Ovary (tissue), 10 donors: ENCODE measurements at regions of chr2 and their contacts with region 1.

Region 1: GRCh38 chr2:119028327-119029174 is 86.6 kb downstream of the MARCO start:
- DNase-seq: peak in 3 of 5 donors; percentile 35 to 44 (median 42)
- H3K4me3 ChIP-seq: no peak overlapping the region
- H3K27ac ChIP-seq: no peak overlapping the region
- H3K4me1 ChIP-seq: no peaks in the 10 kb centered on the region
- H3K27me3 ChIP-seq: no peaks in the 10 kb centered on the region
- CTCF ChIP-seq: peak in 2 of 3 donors; percentile 20 to 25
- EP300 ChIP-seq: no peak
- POLR2A ChIP-seq: no peak

Region 2: DNA sequence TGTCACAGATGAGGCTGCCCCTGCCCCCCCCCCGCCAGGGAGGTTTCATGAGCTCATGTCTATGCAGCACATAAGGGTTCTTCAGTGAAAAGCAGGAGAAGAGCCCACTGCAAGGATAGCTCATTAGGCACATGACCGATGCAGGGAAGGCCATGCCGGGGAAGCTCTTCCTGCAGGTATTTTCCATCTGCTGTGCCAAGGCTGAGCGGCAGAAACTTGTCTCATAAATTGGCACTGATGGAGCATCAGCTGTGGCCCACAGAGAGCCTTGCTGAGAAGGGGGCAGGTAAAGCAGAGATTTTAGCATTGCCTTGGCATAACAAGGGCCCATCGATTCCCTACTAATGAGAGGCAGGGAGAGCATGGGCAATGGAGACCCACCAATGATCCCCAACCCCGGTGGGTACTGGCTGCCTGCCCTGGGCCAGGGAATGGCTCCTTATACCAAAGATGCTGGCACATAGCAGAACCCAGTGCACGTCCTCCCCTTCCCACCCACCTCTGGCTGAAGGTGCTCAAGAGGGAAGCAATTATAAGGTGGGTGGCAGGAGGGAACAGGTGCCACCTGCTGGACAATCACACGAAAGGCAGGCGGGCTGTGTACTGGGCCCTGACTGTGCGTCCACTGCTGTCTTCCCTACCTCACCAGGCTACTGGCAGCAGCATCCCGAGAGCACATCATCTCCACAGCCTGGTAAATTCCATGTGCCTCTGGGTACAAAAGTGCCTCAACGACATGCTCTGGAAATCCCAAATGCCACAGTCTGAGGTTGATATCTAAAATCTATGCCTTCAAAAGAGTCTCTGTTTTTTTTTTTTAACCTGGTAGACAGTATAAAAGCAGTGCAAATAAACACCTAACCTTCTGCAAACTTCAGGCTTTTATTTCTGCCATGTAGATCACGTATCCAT is 236.5 kb after region 1 on chr2:
- intact Hi-C with region 1: loop called in 1 of 4 experiments (anchors 10 kb)
- DNase-seq: peak in 1 of 5 donors; percentile 54
- H3K4me3 ChIP-seq: no peak overlapping the region
- H3K27ac ChIP-seq: no peak overlapping the region
- H3K4me1 ChIP-seq: no peaks in the 10 kb centered on the region
- H3K27me3 ChIP-seq: no peaks in the 10 kb centered on the region
- CTCF ChIP-seq: peak; percentile 26 to 58 (median 33)
- EP300 ChIP-seq: no peak
- POLR2A ChIP-seq: no peak